HepG2 (cell line): ENCODE measurements at regions of chr22 and their contacts with region 1.

Region 1: GRCh38 chr22:49305214-49305909 is 522.3 kb downstream of the BRD1 start:
- DNase-seq: peak; percentile 27
- ATAC-seq: peak; percentile 94
- H3K4me3 ChIP-seq: peak overlapping the region in 1 of 3 experiments; percentile 28; a peak in 1 of 6 replicates
- H3K27ac ChIP-seq: no peak overlapping the region
- H3K4me1 ChIP-seq: no peaks in the 10 kb centered on the region
- H3K27me3 ChIP-seq: peaks cover 7 to 70% of the 10 kb centered on the region in 2 experiments; a peak in 4 of 5 replicates
- CTCF ChIP-seq: peak; percentile 96
- EP300 ChIP-seq: no peak
- POLR2A ChIP-seq: no peak
- RAD21 ChIP-seq: peak; percentile 94

Region 2: GRCh38 chr22:49039625-49040024 is 265.7 kb before region 1 on chr22:
- CTCF ChIA-PET with region 1: no interaction called
- POLR2A ChIA-PET with region 1: no interaction called
- in situ Hi-C with region 1: loop called (anchors 5 kb)
- intact Hi-C with region 1: no loop called
- DNase-seq: peak; percentile 31
- ATAC-seq: peak; percentile 90
- H3K4me3 ChIP-seq: no peak overlapping the region
- H3K27ac ChIP-seq: no peak overlapping the region
- H3K4me1 ChIP-seq: peaks cover 12% of the 10 kb centered on the region
- H3K27me3 ChIP-seq: peaks cover 4 to 52% of the 10 kb centered on the region in 2 experiments
- CTCF ChIP-seq: no peak
- EP300 ChIP-seq: no peak
- POLR2A ChIP-seq: no peak
- RAD21 ChIP-seq: no peak

Region 3: DNA sequence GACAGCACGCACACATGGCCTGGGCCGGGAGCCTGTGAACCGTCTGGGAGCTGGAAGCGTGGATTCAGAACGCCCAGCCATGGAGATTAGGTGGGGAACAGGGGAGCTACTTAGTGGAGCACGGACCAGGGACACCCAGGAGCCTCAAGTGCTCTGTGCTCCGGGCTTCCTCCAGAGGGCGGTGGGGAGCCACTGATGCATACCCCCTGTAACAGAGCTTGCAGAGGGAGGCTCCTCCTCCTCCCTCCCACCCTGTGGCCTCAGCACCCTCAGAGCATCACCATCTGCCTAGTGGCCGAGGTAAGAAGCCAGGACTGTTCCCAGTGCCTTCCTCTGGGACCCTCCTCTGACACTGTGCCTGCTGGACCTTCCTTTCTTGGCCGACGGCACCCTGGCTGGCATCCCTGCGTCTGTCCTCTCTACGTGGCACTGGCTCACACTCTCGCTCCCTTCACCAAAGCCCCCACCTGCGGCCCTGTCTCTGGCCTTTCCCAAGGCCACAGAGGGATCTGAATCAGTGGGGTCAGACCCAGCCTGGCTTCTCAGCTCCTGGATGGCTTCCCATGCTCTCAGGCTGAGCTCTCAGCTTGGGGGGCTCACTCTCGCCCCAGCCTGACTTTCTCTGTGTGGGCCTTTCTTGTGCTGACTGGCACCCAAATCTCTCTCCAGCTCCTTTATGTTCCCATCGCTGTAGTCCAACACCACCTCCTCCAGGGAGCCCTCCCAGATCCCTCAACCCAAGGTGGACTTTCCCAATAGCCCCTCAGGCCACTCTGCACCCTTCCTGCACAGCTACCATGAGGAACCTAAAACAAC is 258.6 kb before region 1 on chr22:
- CTCF ChIA-PET with region 1: interaction called, 26 read pairs
- POLR2A ChIA-PET with region 1: no interaction called
- in situ Hi-C with region 1: loop called (anchors 5 kb)
- intact Hi-C with region 1: loop called (anchors 1 kb)
- DNase-seq: peak; percentile 50
- ATAC-seq: peak; percentile 97
- H3K4me3 ChIP-seq: no peak overlapping the region
- H3K27ac ChIP-seq: no peak overlapping the region
- H3K4me1 ChIP-seq: no peaks in the 10 kb centered on the region
- H3K27me3 ChIP-seq: peaks cover 7 to 83% of the 10 kb centered on the region in 2 experiments; a peak in 4 of 5 replicates
- CTCF ChIP-seq: peak; percentile 84
- EP300 ChIP-seq: no peak
- POLR2A ChIP-seq: no peak
- RAD21 ChIP-seq: peak; percentile 83